ENCODE measurements at regions of chr22 and their contacts with region 1.

Region 1: DNA sequence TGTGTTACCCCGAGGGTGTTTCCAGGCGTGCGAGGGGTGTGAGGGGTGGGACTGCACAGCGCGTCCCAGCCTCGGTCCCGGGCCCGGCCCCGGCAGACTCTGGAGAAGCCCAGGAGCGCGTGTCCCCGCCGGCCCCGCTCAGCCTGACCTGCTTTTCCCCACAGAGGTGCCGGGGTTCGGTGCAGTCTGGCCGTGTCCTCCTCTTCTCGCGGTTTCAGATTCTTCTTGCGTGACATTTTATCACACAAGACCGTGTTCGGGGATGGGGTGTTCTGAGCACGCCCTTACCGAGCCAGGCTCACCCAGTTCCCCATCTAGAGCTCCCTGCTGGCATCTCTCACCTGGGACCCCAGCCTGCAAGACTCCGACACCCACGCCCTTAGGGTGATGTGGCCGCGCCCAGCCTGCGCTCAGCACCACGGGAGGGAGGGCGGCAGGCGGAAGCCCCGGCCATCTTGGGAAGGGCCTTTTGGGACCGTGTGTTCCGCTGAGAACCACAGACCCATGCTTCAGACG is 775.6 kb downstream of the BRD1 start:
- DNase-seq: no peak
- H3K4me3 ChIP-seq: peak overlapping the region; percentile 28 to 45 (median 44)
- H3K27ac ChIP-seq: no peak overlapping the region
- H3K4me1 ChIP-seq: no peaks in the 10 kb centered on the region
- H3K27me3 ChIP-seq: peaks cover 0 to 27% of the 10 kb centered on the region in 2 donors
- CTCF ChIP-seq: no peak
- POLR2A ChIP-seq: no peak

Region 2: GRCh38 chr22:47748957-47749356 is 1303.1 kb before region 1 on chr22:
- intact Hi-C with region 1: loop called (anchors 5 kb)
- DNase-seq: no peak
- H3K4me3 ChIP-seq: no peak overlapping the region
- H3K27ac ChIP-seq: no peak overlapping the region
- H3K4me1 ChIP-seq: no peaks in the 10 kb centered on the region
- H3K27me3 ChIP-seq: peaks cover 0 to 29% of the 10 kb centered on the region in 2 donors
- CTCF ChIP-seq: no peak
- POLR2A ChIP-seq: no peak